A549 (cell line): ENCODE measurements at regions of chr5 and their contacts with region 1.

Region 1: DNA sequence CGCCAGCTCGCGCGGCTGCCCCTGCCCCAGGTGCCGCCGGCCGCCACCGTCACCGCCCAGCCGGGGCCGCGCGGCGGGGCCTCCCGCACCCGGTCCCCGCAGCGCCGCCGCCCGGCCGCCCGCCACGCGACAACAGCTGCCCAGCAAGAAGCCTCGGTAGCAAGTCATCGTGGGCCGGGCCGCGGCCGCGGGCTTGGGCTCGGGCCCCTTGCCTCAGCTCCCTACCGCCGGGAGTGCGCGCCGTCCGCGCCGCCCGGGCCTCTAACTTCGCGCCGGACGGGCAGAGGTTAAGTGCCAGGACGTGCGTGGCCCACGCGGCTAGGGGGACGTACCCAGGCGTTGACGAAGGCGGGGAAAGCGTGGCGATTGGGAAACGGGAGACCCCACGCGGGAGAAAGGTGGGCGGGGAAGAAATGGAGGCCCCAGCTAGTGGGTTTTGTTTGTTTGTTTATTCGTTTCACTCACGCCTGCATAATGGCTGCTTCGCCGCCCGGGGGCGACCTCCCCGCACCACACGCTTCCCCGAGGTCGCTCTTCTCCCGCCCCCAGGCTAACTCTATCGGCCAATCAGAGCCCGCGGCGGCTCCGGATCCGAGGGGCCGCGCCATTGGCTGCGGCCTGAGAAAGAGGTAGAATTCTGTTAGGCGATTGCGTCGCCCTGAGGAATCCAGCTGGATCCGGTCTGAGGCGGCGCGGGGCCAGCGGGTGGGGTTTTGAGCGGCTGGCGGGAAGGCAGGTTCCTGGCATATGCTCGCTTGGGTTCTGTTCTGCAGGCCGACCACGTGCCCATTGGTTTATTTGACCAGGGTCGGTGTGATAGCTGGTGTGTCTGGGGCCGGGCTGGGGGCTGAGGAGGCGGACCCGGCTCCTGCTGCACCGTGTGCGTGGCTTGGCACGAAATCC is at the start of gene NADK2:
- DNase-seq: peak; percentile 87 to 96
- ATAC-seq: peak; percentile 87 to 94
- H3K4me3 ChIP-seq: peak within 1 kb of the TSS; percentile 87
- H3K27ac ChIP-seq: peak within 1 kb of the TSS; percentile 90 to 93
- H3K4me1 ChIP-seq: peaks cover 24% of the 10 kb centered on the region; the same call in 2 of the 3 replicates
- CTCF ChIP-seq: peak; percentile 47
- EP300 ChIP-seq: no peak
- POLR2A ChIP-seq: peak; percentile 87
- RAD21 ChIP-seq: peak; percentile 21 to 48; a peak in 3 of 5 replicates
- polyA plus RNA-seq, gene NADK2: 17.8 and 21.9 TPM in 2 replicates

Region 2: GRCh38 chr5:36151434-36152323 is 90.2 kb before region 1 on chr5 and contains the starts of genes LMBRD2 and SKP2:
- CTCF ChIA-PET with region 1: interaction called, 4 read pairs
- POLR2A ChIA-PET with region 1: interaction called, 19 read pairs
- DNase-seq: peak; percentile 95
- ATAC-seq: peak; percentile 98 to 99
- H3K4me3 ChIP-seq: peak within 1 kb of the TSS; percentile 78
- H3K27ac ChIP-seq: peak within 1 kb of the TSS; percentile 79 to 89
- H3K4me1 ChIP-seq: peaks cover 7% of the 10 kb centered on the region; the same call in 1 of the 3 replicates
- CTCF ChIP-seq: no peak
- EP300 ChIP-seq: no peak
- POLR2A ChIP-seq: peak; percentile 82
- RAD21 ChIP-seq: no peak
- polyA plus RNA-seq, gene LMBRD2: 5.4 and 6.8 TPM in 2 replicates
- polyA plus RNA-seq, gene SKP2: 13.7 and 23.4 TPM in 2 replicates

Region 3: DNA sequence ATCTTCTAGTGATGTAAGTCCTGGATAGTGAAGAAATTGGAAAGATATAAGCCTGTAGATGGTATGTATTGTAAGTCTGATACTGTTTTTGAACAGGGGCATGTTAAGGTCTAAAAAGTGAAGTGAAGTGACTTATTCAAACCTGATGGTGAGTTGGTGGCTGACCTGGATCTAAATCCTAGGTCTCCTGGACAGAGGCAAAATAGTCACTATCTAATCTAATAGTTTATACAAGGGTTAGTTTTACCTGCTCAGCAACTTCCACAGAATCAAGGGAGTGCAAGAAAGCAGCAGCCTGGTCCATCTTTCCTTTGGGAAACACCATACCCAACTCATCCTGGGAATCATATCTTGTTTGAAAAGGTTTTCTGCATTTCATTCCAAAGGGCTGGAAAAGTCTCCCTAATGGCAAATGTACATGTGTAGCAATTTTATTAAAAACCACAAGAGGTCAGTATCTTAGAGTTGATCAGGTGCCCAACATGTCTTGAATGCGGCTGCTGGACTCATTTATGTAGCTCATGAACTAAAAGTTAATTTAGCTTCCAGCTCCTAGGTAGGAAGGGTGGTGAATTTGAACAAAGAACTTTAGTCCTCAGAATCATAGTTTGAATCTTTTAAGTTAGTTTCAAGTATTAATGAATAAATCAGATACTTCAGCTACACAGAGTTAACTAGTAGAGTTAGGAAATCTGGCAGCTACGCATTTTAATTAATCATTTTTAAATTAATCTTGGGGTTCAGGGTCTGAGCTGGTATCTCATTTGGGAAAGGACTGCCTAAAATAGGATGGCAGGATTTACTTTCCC is 64.0 kb before region 1 on chr5:
- CTCF ChIA-PET with region 1: interaction called, 10 read pairs
- POLR2A ChIA-PET with region 1: no interaction called
- DNase-seq: peak; percentile 13 to 56
- ATAC-seq: peak; percentile 88 to 90
- H3K4me3 ChIP-seq: no peak overlapping the region
- H3K27ac ChIP-seq: no peak overlapping the region
- H3K4me1 ChIP-seq: no peaks in the 10 kb centered on the region
- CTCF ChIP-seq: peak; percentile 65
- EP300 ChIP-seq: no peak
- POLR2A ChIP-seq: no peak
- RAD21 ChIP-seq: peak; percentile 30 to 50

Region 4: GRCh38 chr5:36217567-36217966 is 24.3 kb before region 1 on chr5:
- CTCF ChIA-PET with region 1: interaction called, 17 read pairs
- POLR2A ChIA-PET with region 1: no interaction called
- DNase-seq: no peak
- ATAC-seq: no peak
- H3K4me3 ChIP-seq: no peak overlapping the region
- H3K27ac ChIP-seq: no peak overlapping the region
- H3K4me1 ChIP-seq: no peaks in the 10 kb centered on the region
- CTCF ChIP-seq: no peak
- EP300 ChIP-seq: no peak
- POLR2A ChIP-seq: no peak
- RAD21 ChIP-seq: no peak

Region 5: DNA sequence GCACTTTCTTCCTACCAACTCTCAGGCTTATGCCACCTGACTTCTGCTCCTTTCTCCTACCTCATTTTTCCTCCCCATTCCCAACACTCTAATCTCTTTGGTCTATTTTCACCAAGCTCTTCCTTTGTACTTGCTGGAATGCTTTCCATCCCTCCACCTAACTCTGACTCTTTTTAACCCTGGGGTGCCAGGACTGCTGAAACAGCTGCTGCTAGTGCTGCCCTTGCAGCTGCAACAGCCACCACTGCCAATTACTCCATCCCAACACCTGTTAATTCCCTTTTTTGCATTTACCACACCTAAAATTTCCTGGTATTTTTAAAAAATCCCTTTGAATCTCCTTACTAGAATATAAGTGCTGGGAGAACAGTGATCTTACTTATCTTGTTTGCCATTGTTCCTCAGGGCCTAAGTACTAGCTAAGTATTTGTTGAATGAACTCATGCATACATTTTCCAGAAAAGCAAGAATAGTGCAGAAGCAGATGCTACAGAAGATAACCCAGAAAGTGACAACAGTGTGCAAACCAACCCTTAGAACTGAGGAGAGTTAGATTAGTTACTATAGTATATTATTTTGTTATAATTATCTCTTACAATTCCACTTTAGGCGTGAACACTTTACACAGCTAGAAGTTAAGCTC is 11.6 kb before region 1 on chr5:
- CTCF ChIA-PET with region 1: interaction called, 21 read pairs
- POLR2A ChIA-PET with region 1: interaction called, 3 read pairs
- DNase-seq: no peak
- ATAC-seq: no peak
- H3K4me3 ChIP-seq: no peak overlapping the region
- H3K27ac ChIP-seq: no peak overlapping the region
- H3K4me1 ChIP-seq: peaks cover 9% of the 10 kb centered on the region; the same call in 2 of the 3 replicates
- CTCF ChIP-seq: no peak
- EP300 ChIP-seq: no peak
- POLR2A ChIP-seq: no peak
- RAD21 ChIP-seq: no peak

Region 6: DNA sequence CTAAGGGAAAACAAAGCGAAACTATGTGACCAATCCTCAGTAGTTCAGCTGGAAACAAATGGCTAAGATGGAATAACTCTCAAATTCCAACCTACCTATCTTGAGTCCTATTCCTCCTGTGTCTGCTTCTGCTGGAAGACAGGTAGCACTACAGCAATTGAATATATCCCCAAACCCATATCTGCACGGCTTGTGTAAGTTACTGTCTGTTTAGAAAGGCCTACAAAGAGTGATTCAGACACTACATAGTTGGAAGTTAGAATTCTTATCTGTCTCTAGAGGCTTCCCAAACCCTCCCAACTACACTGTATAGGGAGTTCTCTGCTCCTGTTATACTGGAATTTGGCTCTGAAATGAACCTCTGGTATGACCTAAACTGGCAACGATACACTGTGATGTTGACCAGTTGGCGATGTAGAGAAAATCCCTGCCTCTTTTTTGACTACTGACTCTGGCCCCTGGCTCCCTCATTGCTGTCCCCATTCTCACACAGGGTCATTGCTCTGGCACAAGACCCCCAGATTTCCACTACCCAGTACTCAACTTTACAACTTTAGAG is 22.4 kb after region 1 on chr5:
- CTCF ChIA-PET with region 1: interaction called, 15 read pairs
- POLR2A ChIA-PET with region 1: no interaction called
- DNase-seq: no peak
- ATAC-seq: 0 out of 6 replicates have a peak, but pooled peaks of 1 of the 2 experiments have one; percentile 39
- H3K4me3 ChIP-seq: no peak overlapping the region
- H3K27ac ChIP-seq: no peak overlapping the region
- H3K4me1 ChIP-seq: no peaks in the 10 kb centered on the region
- CTCF ChIP-seq: no peak
- EP300 ChIP-seq: no peak
- POLR2A ChIP-seq: no peak
- RAD21 ChIP-seq: no peak

Region 7: DNA sequence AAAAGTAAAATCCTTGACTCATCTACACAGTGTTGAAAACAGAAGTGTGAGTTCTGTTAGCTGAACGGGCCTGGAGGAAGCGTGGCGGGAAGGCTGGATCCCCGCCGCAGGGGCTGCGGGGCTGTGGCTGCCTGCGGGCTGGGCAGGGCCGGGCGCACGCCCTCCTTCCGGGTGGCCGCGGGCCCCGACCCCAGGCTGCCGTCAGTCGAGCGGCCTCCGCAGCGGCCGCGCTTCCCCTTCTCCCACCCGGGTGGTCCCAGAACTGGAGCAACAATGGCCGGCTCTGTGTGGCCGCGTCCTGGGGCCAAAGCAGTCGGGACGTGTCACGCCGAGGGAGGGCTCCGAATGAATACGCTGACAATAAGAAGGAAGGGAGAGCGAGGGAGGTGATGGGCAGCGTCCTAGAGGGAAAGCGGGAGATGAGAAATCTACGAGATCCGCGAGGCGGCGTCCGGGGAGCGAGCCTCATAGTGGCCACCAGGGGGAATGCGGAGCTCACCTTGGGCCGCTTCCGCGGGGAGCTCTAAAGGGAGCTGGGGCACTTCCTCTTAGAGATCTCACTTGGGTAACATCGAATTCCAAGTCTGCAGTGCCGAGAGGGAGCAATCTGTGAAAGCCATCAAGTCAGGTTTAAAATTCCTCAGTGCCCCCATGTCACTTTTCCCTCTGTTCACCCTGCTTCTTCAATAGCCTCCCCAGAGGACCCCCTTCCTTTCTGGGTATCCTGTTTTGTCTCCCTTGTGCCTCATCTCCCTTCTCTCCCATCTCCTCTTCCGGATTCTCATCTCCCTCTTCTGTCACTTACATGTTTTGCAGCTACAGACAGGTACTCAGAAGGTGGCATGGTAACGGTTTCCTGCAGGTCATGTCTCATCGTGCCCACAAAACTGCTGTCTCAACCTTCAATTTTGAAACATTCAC is 448.4 kb after region 1 on chr5:
- CTCF ChIA-PET with region 1: interaction called, 10 read pairs
- POLR2A ChIA-PET with region 1: interaction called, 4 read pairs
- DNase-seq: peak; percentile 79 to 85
- ATAC-seq: peak; percentile 90 to 95
- H3K4me3 ChIP-seq: peak overlapping the region; percentile 45
- H3K27ac ChIP-seq: peak overlapping the region; percentile 26 to 71; a peak in 5 of 6 replicates
- H3K4me1 ChIP-seq: 0 out of 3 replicates have a peak, but pooled peaks cover 4% of the 10 kb centered on the region
- CTCF ChIP-seq: peak; percentile 67
- EP300 ChIP-seq: no peak
- POLR2A ChIP-seq: no peak
- RAD21 ChIP-seq: peak in 1 of 2 experiments; percentile 29; a peak in 2 of 5 replicates